ENCODE measurements at regions of chr19 and their contacts with region 1.

Region 1: GRCh38 chr19:48110350-48110966 is at the start of gene PLA2G4C:
- DNase-seq: peak; percentile 72 to 94
- ATAC-seq: peak; percentile 76 to 87 (median 85)
- H3K4me3 ChIP-seq: peak within 1 kb of the TSS; percentile 58
- H3K4me3 Mint-ChIP-seq: peak within 1 kb of the TSS; percentile 74
- H3K27ac ChIP-seq: peak within 1 kb of the TSS; percentile 72
- H3K27ac Mint-ChIP-seq: peak within 1 kb of the TSS; percentile 80 to 85
- H3K4me1 ChIP-seq: peaks cover 20% of the 10 kb centered on the region
- H3K4me1 Mint-ChIP-seq: peaks cover 0 to 4% of the 10 kb centered on the region in 2 donors
- H3K27me3 ChIP-seq: no peaks in the 10 kb centered on the region
- H3K27me3 Mint-ChIP-seq: peaks cover 0 to 4% of the 10 kb centered on the region in 2 donors
- CTCF ChIP-seq: no peak
- total RNA-seq, gene PLA2G4C: 0.86 to 5.1 (median 4.6) TPM

Region 2: DNA sequence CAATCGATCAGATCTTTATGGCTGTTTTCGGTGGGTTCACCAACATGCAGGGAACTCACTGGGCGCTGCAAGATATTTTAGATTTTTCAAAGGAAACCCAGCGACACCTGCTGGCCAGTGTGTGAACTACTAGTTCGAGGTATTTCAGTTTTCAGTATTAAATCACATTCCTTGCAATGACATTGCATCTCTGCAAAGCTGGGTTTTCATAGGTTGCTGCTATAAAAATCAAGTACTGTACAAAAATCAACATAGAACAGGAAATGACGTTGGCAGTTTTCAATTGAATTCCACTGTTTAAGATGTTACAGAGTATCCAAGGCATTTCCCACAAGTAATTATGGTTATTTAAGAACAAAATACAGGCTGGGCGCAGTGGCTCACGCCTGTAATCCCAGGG is 42.1 kb after region 1 on chr19:
- intact Hi-C with region 1: loop called (anchors 2 kb)
- DNase-seq: peak; percentile 57 to 76
- ATAC-seq: peak; percentile 64 to 73 (median 72)
- H3K4me3 ChIP-seq: no peak overlapping the region
- H3K4me3 Mint-ChIP-seq: no peak overlapping the region
- H3K27ac ChIP-seq: no peak overlapping the region
- H3K27ac Mint-ChIP-seq: no peak overlapping the region
- H3K4me1 ChIP-seq: no peaks in the 10 kb centered on the region
- H3K4me1 Mint-ChIP-seq: no peaks in the 10 kb centered on the region
- H3K27me3 ChIP-seq: no peaks in the 10 kb centered on the region
- H3K27me3 Mint-ChIP-seq: no peaks in the 10 kb centered on the region
- CTCF ChIP-seq: peak; percentile 90

Measured in natural killer cell (primary cell).